Endothelial cell of umbilical vein (primary cell): ENCODE measurements at regions of chr11 and their contacts with region 1.

Region 1: GRCh38 chr11:61516675-61517572 is 8.4 kb downstream of the LRRC10B start:
- DNase-seq: peak; percentile 42
- H3K4me3 ChIP-seq: no peak overlapping the region
- H3K27ac ChIP-seq: no peak overlapping the region
- H3K4me1 ChIP-seq: peaks cover 4% of the 10 kb centered on the region
- H3K27me3 ChIP-seq: no peaks in the 10 kb centered on the region
- CTCF ChIP-seq: peak; percentile 96 to 97
- POLR2A ChIP-seq: no peak

Region 2: GRCh38 chr11:61446211-61446651 is 70.7 kb before region 1 on chr11:
- CTCF ChIA-PET with region 1: interaction called, 229 read pairs
- POLR2A ChIA-PET with region 1: interaction called, 3 read pairs
- dilution Hi-C with region 1: no loop called
- intact Hi-C with region 1: loop called (anchors 1 kb)
- DNase-seq: peak; percentile 93
- H3K4me3 ChIP-seq: no peak overlapping the region
- H3K27ac ChIP-seq: no peak overlapping the region
- H3K4me1 ChIP-seq: no peaks in the 10 kb centered on the region
- H3K27me3 ChIP-seq: no peaks in the 10 kb centered on the region
- CTCF ChIP-seq: peak; percentile 91 to 94
- POLR2A ChIP-seq: no peak

Region 3: DNA sequence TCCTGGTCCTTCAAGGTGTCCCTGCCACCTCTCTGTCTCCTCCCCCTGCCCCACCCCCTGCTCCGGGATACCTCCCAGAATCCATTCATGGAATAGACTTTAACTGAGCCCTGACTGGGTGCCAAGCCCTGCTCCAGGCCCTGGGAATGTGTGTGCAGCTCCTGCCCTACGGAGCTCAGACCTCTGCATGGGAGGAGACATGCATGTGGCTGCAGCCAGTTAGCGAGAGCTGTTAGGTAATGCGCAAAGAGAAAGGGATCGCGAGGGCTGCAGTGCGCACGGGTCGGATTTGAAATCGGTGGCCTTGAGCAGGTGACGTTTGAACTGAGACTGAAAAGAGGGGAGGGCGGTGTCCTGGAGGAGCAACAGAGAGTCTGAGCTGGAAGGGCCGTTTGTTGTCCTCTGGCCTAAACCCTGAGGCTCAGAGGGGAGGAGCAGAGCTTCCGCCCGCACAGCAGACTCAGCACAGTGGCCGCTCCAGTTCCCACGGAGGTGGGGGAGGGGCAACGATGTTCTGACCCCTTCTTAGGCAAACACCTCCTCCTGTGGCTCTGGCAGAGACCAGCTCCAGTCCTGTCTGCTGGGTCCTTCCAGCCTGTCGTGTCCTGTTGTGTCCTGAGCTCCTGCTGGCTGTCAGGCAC is 28.2 kb before region 1 on chr11:
- CTCF ChIA-PET with region 1: interaction called, 20 read pairs
- POLR2A ChIA-PET with region 1: no interaction called
- dilution Hi-C with region 1: no loop called
- intact Hi-C with region 1: no loop called
- DNase-seq: no peak
- H3K4me3 ChIP-seq: no peak overlapping the region
- H3K27ac ChIP-seq: no peak overlapping the region
- H3K4me1 ChIP-seq: no peaks in the 10 kb centered on the region
- H3K27me3 ChIP-seq: no peaks in the 10 kb centered on the region
- CTCF ChIP-seq: no peak
- POLR2A ChIP-seq: no peak

Region 4: DNA sequence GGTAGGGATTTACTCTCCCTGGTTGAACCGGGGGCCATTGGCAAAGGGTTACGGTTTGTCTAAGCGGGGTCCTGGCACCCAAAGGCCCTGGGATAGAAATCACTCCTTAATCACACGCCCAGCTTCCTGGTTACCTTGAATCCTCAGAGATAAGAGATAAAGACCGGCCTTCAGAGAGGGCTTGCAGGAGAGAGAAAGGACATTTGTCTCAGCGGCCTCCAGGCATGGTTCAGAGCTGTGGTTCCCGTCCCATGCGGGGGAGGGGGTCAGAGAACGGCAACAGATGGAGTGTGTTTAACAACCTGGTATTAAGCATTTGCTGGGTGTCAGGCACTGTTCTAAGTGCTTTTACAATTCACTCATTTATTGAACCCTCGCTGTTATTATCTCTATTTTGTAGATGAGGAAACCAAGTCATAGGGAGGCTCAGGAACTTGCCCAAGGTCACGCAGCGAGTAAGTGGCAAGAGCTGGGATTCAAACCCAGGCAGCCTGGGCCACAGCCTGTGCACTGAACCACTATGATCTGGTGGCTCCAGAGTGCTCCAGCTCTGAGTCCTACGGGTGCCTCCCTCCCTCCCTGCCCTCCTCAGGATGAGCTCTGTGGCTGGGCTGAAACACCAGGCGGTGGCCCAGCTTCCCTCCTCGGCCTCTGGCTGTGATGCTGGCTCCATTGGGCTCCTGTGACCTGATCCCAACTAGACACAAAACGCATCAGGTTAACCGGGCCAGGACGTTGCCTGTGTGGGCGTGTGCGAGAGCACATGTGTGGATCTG is 10.2 kb after region 1 on chr11:
- CTCF ChIA-PET with region 1: interaction called, 53 read pairs
- POLR2A ChIA-PET with region 1: no interaction called
- dilution Hi-C with region 1: no loop called
- intact Hi-C with region 1: no loop called
- DNase-seq: no peak
- H3K4me3 ChIP-seq: no peak overlapping the region
- H3K27ac ChIP-seq: no peak overlapping the region
- H3K4me1 ChIP-seq: no peaks in the 10 kb centered on the region
- H3K27me3 ChIP-seq: no peaks in the 10 kb centered on the region
- CTCF ChIP-seq: no peak
- POLR2A ChIP-seq: no peak

Region 5: GRCh38 chr11:61567286-61568061 is 50.5 kb after region 1 on chr11:
- CTCF ChIA-PET with region 1: interaction called, 11 read pairs
- POLR2A ChIA-PET with region 1: no interaction called
- dilution Hi-C with region 1: no loop called
- intact Hi-C with region 1: no loop called
- DNase-seq: peak; percentile 69
- H3K4me3 ChIP-seq: no peak overlapping the region
- H3K27ac ChIP-seq: no peak overlapping the region
- H3K4me1 ChIP-seq: no peaks in the 10 kb centered on the region
- H3K27me3 ChIP-seq: peaks cover 0 to 3% of the 10 kb centered on the region in 2 experiments
- CTCF ChIP-seq: peak; percentile 50 to 74
- POLR2A ChIP-seq: no peak